Cardiac septum (tissue), 1 donor: ENCODE measurements at regions of chr4 and their contacts with region 1.

Region 1: DNA sequence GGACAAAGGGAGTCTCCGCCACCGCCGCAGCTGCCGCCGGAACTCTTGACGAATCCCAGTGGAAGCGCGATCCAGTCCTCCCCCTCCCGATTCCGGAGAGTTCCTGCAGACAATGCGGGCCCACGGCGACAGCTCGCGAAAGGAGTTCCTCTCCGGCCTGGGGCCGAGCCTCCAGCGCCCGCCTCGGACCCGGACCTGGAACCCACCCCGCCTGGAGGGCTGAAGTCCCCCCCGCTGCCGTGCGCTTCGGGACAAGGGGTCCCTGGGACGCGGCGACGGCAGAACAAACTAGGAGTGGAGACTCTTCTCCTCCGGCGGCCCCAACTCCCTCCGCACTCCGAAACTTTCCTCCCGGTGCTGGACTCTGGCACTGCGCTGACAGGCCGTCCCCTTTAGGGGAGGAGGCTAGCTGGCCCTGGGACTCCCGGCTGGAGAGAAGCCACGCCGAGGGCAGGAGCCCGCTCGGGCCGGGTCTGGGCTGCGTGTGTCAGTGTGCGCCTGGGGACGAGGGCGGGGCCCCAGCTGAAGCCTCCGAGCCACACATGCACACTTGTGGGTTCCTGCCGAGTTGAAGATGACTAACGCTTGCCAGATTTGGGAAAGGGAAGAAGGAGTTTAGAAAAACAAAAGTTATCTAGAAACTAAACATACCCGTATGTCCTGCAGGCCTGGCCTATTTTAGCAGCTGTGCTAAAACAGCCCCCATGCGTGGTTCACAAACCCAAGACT is at the start of gene ANTXR2:
- DNase-seq: peak; percentile 95
- total RNA-seq, gene ANTXR2: 54.6 TPM

Region 2: GRCh38 chr4:79842162-79842561 is 230.7 kb before region 1 on chr4:
- intact Hi-C with region 1: no loop called
- DNase-seq: no peak

Region 3: GRCh38 chr4:79917246-79917645 is 155.7 kb before region 1 on chr4:
- intact Hi-C with region 1: loop called (anchors 5 kb)
- DNase-seq: no peak

Region 4: GRCh38 chr4:80036949-80037685 is 35.8 kb before region 1 on chr4:
- intact Hi-C with region 1: loop called (anchors 2 kb)
- DNase-seq: no peak

Region 5: DNA sequence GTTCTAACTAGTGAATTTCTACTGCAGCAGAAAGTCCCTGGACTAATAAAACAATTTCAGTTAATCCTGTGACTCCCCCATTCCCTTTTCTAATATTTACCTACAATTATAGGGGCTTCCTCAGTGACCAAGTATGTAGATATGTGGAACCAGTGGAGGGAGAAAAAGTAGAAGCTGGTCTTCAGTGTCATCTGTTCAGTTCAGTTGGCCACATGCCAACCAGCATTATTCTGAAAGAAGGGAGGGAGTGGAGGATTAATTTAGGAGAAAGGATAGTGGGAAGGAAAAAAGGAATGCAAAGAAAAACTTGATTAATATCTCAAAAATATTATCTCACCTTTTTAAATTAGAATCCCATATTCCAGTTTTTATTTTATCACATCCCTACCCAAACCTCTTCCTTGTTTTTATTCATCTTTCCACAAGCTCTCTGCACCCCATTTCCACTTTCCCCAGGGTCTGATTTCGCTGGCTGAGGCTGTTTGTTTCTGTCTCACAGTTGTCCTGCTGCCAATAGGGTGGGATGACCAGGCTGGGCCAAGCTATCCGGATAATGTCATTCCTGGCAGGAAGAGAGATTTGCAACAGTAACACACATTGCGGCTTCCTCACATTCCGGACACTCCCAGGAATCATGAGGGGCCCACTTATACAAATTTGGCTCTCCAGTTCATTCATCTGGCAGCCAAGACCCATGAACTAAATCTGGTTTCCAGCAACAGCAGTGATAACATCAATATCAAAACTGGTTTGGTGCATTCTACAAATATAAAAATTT is 24.7 kb after region 1 on chr4:
- intact Hi-C with region 1: loop called (anchors 1 kb)
- DNase-seq: peak; percentile 77

Region 6: GRCh38 chr4:80184053-80184790 is 111.3 kb after region 1 on chr4:
- intact Hi-C with region 1: loop called (anchors 2 kb)
- DNase-seq: peak; percentile 95

Region 7: GRCh38 chr4:80271801-80272200 is 198.9 kb after region 1 on chr4:
- intact Hi-C with region 1: no loop called
- DNase-seq: no peak